HCT116 (cell line): ENCODE measurements at regions of chr5 and their contacts with region 1.

Region 1: DNA sequence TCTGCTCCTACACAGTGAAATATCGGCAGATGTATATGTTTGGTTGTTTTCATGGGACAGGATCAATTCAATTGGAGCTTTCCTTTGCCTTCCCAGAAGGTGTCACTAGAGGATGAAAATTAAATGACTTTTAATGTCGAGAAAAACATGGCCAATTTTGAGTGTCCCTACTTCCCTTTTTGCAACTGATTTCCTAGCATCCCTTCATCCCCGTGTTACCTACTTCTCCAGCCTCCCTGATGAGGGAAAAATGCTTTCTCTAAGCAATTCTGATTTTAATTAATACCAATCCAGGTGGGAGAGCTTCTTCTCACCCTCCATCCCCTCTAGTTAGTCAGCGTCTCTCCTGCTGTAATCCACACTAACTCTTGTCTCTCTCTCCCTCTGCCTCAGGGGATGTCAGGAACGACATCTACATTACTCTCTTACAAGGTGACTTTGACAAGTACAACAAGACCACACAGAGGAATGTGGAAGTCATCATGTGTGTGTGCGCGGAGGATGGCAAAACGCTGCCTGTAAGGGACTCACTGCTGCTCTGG is 64.9 kb downstream of the DOCK2 start:
- DNase-seq: no peak
- ATAC-seq: peak; percentile 61
- H3K4me3 ChIP-seq: no peak overlapping the region
- H3K27ac ChIP-seq: no peak overlapping the region
- H3K4me1 ChIP-seq: peaks cover 0 to 6% of the 10 kb centered on the region in 2 experiments; a peak in 2 of 4 replicates
- H3K27me3 ChIP-seq: peaks cover 10% of the 10 kb centered on the region
- CTCF ChIP-seq: peak; percentile 20 to 40 (median 29); a peak in 3 of 6 replicates
- POLR2A ChIP-seq: no peak
- RAD21 ChIP-seq: peak; percentile 45

Region 2: GRCh38 chr5:169895926-169896325 is 193.9 kb after region 1 on chr5:
- CTCF ChIA-PET with region 1: no interaction called
- POLR2A ChIA-PET with region 1: no interaction called
- RAD21 ChIA-PET with region 1: no interaction called
- intact Hi-C with region 1: no loop called
- DNase-seq: no peak
- ATAC-seq: no peak
- H3K4me3 ChIP-seq: no peak overlapping the region
- H3K27ac ChIP-seq: no peak overlapping the region
- H3K4me1 ChIP-seq: no peaks in the 10 kb centered on the region
- H3K27me3 ChIP-seq: peaks cover 43% of the 10 kb centered on the region
- CTCF ChIP-seq: no peak
- POLR2A ChIP-seq: no peak
- RAD21 ChIP-seq: no peak

Region 3: DNA sequence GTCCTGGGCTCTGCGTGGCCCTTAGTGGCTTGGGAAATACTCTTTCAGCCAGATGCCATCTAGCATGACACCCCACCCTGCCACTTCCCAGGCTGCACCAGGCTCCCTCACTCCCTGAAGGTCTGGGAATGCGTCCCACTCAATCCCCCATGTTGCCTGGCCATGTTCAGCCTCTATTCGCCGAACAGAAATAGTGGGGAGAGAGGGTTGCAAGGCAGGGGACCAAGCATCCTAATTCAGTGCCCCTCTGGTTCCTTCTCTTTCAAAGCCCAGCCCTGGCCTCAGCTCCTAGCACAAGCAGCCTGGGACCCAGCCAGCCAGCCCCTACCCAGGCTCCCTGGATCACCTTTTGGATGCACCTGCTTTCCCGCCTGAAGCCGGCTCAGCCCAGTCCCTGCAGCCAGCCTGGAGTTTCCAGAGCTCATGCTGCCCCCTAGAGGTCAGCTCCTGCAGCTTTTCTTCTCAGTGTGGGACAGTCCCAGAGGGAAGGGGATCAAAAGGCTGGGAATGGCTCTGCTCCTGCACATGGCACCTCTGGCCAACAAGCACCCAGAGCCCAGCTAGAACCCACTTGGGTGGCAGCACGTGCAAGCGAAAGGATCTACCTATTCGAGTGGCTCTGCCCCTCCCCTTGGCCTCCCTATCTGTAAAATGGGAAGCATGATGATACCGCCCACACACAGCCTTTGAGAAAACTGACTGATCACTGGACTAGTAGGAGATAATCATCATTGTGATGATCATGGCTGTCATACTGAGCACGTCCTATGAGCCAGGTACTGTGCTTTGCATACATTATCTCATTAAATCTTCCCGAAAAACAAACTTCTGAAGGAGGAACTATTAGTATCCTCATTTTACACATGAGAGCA is 482.1 kb after region 1 on chr5:
- CTCF ChIA-PET with region 1: interaction called, 3 read pairs
- POLR2A ChIA-PET with region 1: no interaction called
- RAD21 ChIA-PET with region 1: no interaction called
- intact Hi-C with region 1: loop called (anchors 10 kb)
- DNase-seq: peak; percentile 47
- ATAC-seq: peak; percentile 99
- H3K4me3 ChIP-seq: no peak overlapping the region
- H3K27ac ChIP-seq: no peak overlapping the region
- H3K4me1 ChIP-seq: no peaks in the 10 kb centered on the region
- H3K27me3 ChIP-seq: peaks cover 3% of the 10 kb centered on the region; the same call in 1 of the 2 replicates
- CTCF ChIP-seq: peak; percentile 84 to 90 (median 87)
- POLR2A ChIP-seq: no peak
- RAD21 ChIP-seq: peak; percentile 93